ENCODE measurements at regions of chr22 and their contacts with region 1.

Region 1: DNA sequence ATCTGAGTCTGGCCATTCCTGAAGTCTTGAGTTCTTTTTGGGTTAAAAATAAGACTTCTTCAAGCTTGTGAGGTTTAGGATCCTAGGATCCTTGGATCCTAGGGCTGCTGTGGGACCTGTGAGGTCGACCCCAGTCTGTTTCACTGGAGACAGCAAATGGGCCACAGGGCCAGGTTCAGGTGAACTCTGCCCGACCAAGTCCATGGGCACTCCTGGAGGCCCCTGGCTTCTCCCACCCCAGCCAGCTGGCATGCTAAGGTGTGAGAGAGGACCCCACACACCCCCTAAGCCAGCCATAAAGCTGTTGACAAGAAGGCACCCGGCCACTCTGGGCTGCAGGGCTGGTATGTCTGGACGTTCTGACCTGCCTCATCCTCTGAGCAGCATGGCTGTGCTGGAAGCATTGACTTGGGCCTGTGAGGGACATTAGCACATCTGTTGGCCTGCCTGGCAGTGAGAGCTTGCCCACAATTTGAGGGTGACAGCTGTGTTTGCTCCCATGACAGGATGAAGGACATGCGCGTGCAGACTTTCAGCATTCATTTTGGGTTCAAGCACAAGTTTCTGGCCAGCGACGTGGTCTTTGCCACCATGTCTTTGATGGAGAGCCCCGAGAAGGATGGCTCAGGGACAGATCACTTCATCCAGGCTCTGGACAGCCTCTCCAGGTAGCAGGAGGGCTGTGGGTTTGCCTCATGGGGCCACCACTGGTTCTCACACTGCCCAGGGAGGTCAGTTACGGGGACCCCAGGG is 16.0 kb downstream of the CLDN5 start:
- DNase-seq: no peak
- H3K4me3 ChIP-seq: no peak overlapping the region
- CTCF ChIP-seq: no peak

Region 2: GRCh38 chr22:19495562-19496323 is 12.5 kb before region 1 on chr22:
- CTCF ChIA-PET with region 1: interaction called, 10 read pairs
- POLR2A ChIA-PET with region 1: no interaction called
- DNase-seq: no peak
- H3K4me3 ChIP-seq: no peak overlapping the region
- CTCF ChIP-seq: peak; percentile 5